ENCODE measurements at regions of chr2 and their contacts with region 1.

Region 1: GRCh38 chr2:101387151-101387807 is at the start of gene CREG2:
- DNase-seq: peak; percentile 77
- H3K4me3 Mint-ChIP-seq: peak within 1 kb of the TSS; percentile 65
- H3K27ac Mint-ChIP-seq: no peak within 1 kb of the TSS
- H3K4me1 Mint-ChIP-seq: peaks cover 10% of the 10 kb centered on the region
- H3K27me3 Mint-ChIP-seq: peaks cover 81% of the 10 kb centered on the region

Region 2: GRCh38 chr2:101264360-101264939 is 122.8 kb before region 1 on chr2:
- CTCF ChIA-PET with region 1: no interaction called
- DNase-seq: no peak
- H3K4me3 Mint-ChIP-seq: no peak overlapping the region
- H3K27ac Mint-ChIP-seq: no peak overlapping the region
- H3K4me1 Mint-ChIP-seq: peaks cover 36% of the 10 kb centered on the region
- H3K27me3 Mint-ChIP-seq: no peaks in the 10 kb centered on the region

Region 3: GRCh38 chr2:101291973-101292372 is 95.3 kb before region 1 on chr2:
- CTCF ChIA-PET with region 1: no interaction called
- DNase-seq: no peak
- H3K4me3 Mint-ChIP-seq: no peak overlapping the region
- H3K27ac Mint-ChIP-seq: no peak overlapping the region
- H3K4me1 Mint-ChIP-seq: peaks cover 28% of the 10 kb centered on the region
- H3K27me3 Mint-ChIP-seq: no peaks in the 10 kb centered on the region

Region 4: DNA sequence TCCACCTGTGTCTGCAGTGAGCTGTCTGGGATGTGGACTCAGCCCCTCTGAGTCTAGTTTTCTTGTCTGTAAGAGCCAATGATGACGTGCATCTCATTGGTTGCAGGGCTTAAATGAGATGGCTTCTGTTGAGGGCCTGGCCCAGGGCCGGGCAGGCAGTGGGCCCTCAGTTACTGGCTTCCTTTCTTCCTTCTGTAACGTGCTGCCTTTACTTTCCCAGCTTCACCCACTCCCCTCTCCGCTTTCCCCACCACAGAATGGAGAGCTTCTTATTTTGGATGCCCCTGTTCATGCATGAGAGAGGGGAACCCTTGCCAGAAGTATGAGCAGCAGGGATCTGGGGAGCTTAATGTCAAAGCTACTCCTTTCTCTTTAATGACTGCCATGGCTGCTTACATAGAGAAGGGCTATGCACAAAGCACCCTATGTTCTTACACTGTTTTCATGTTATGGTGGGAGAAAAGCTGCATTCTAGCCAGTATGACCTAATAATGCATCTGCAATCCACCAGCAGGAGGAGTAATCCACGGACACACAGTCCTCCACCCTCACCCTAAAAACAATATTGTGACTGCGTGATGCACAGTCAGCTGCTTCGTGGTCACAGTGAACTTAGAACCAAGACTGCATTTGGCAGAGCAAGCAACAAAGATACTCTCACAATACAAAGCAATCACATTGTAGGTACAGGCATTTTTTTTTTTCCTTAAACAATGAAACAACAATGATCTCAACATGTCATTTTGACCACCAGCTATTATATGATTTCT is 37.2 kb before region 1 on chr2:
- CTCF ChIA-PET with region 1: interaction called, 15 read pairs
- DNase-seq: peak; percentile 52
- H3K4me3 Mint-ChIP-seq: no peak overlapping the region
- H3K27ac Mint-ChIP-seq: no peak overlapping the region
- H3K4me1 Mint-ChIP-seq: peaks cover 14% of the 10 kb centered on the region
- H3K27me3 Mint-ChIP-seq: peaks cover 24% of the 10 kb centered on the region

Region 5: GRCh38 chr2:101361121-101361870 is 26.0 kb before region 1 on chr2:
- CTCF ChIA-PET with region 1: interaction called, 10 read pairs
- DNase-seq: peak; percentile 70
- H3K4me3 Mint-ChIP-seq: peak overlapping the region; percentile 19
- H3K27ac Mint-ChIP-seq: peak overlapping the region; percentile 88
- H3K4me1 Mint-ChIP-seq: peaks cover 48% of the 10 kb centered on the region
- H3K27me3 Mint-ChIP-seq: peaks cover 11% of the 10 kb centered on the region

Region 6: GRCh38 chr2:101638181-101638711 is 251.0 kb after region 1 on chr2:
- CTCF ChIA-PET with region 1: no interaction called
- DNase-seq: no peak
- H3K4me3 Mint-ChIP-seq: no peak overlapping the region
- H3K27ac Mint-ChIP-seq: no peak overlapping the region
- H3K4me1 Mint-ChIP-seq: no peaks in the 10 kb centered on the region
- H3K27me3 Mint-ChIP-seq: peaks cover 6% of the 10 kb centered on the region

Measured in activated naive CD4-positive, alpha-beta T cell treated with anti-CD3 and anti-CD28 coated beads, Interleukin-2, amount 10 ng/mL, durations not matched to agents 7 days and 5 days (primary cell).